Gastrocnemius medialis (tissue), 4 donors: ENCODE measurements at regions of chr5 and their contacts with region 1.

Region 1: DNA sequence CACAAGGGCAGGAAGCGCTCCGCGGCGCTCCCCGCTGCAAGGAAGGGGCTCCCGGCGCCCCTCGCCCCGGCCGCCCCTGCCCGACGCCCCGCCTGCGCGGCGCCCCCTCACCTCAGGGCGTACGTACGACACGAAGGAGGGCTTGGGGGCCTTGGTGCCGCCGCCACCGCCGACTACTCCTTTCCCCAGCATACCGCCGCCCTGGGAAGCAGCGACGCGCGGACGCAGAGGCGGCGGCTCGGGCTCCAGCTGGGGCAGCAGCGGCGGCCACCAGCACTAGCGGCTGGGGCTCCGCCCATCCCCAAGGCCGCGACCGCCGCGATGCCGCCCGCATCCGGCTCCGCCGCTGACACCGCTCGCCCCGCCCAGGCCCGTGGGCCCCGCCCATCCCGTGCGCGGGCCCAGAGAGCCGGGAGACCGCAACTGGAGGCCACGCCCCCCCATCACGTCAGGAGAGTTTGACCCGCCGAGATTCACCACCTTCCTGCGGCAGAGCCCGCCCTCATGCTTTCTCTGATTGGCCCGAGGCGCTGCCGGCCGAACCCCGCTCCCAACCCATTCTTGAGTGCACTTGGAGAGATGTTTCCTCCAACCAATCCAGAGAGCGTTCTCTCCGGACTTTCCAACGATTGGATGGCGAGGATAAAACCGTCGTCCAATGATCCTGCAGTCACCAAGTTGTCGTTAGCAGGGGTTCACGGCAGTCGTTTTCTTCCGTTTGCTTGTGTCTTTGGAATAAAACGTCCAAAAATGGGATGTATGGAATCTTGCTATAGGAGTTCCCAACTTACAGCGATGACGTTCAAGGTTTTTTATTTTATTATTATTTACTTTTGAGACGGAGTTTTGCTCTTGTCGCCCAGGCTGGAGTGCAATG is at the start of gene MTMR12:
- DNase-seq: peak; percentile 99
- ATAC-seq: peak; percentile 97 to 98
- H3K4me3 ChIP-seq: peak within 1 kb of the TSS; percentile 69 to 88 (median 82)
- H3K27ac ChIP-seq: peak within 1 kb of the TSS; percentile 85 to 98 (median 92)
- H3K4me1 ChIP-seq: peaks cover 10 to 33% of the 10 kb centered on the region in 2 donors
- H3K27me3 ChIP-seq: no peaks in the 10 kb centered on the region
- CTCF ChIP-seq: no peak
- POLR2A ChIP-seq: peak; percentile 88 to 91
- total RNA-seq, gene MTMR12: 6.4 to 11.5 (median 10.6) TPM

Region 2: DNA sequence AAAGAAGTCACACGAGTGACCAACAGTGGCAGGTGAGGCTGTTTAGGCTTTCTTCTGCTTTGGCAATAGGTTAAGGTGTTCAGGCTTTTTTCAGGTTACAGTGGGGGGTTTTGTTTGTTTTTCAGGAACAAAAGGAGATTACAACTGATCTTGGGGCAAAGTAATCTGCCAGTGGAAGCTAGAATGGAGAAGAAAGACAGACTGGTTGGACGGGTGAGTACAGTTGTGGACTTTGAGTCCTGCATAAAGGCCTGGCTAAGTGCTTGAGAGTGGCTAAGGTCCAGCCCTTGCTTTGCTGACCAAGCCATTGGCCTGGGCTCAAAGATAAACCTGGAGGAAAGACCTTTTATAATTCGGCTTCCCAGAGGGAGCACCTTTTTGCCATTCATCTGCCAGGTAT is 63.2 kb before region 1 on chr5:
- in situ Hi-C with region 1: no loop called
- intact Hi-C with region 1: no loop called
- DNase-seq: no peak
- ATAC-seq: no peak
- H3K4me3 ChIP-seq: no peak overlapping the region
- H3K27ac ChIP-seq: no peak overlapping the region
- H3K4me1 ChIP-seq: no peaks in the 10 kb centered on the region
- H3K27me3 ChIP-seq: no peaks in the 10 kb centered on the region
- CTCF ChIP-seq: no peak
- POLR2A ChIP-seq: no peak

Region 3: DNA sequence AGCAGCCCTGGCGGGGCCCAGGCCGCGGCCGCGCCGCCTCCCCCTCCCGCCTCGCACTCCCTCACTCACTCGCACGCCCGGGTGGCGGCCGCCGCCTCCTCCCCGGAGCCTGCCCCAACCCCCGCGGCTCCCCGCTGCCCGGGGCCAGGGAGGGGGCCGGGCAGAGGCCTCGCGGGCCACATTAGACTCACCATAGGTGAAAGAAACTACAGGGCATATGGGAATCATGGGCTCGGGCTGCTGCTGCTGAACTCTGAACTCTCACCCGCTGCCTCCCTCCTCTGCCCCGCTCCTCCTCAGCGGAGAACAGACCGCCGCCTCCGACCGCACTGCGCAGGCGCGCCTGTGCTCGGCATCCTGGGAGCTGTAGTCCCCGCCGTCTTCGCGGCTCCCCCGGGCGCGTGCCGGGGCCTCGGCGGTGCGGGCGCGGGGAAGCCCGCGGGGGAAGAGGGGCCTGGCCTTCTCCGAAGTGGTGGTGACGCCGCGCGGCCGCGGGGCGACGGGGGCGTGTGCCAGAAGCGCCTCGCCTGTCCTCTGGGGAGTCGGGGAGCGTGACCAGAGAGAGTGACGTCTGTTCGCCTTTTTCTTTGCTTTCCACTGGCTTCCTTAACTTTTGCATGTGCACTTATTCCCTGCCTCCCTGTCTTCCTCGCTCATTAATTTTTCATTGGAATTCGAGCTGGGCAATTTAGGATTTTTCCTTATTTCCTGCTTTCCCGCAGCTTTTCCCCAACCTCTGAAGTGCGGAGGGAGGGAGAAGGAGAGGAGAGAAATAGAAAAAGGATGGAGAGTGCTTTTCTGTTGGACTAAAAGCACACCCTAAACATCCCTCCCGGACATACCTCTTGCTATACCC is 131.8 kb after region 1 on chr5 and contains the start of gene ZFR:
- in situ Hi-C with region 1: loop called in 1 of 4 experiments (anchors 10 kb)
- intact Hi-C with region 1: no loop called
- DNase-seq: peak; percentile 88 to 92
- ATAC-seq: peak; percentile 90 to 94
- H3K4me3 ChIP-seq: peak within 1 kb of the TSS; percentile 68 to 88 (median 76)
- H3K27ac ChIP-seq: peak within 1 kb of the TSS; percentile 89 to 97 (median 92)
- H3K4me1 ChIP-seq: peaks cover 26 to 34% of the 10 kb centered on the region in 2 donors
- H3K27me3 ChIP-seq: no peaks in the 10 kb centered on the region
- CTCF ChIP-seq: no peak
- POLR2A ChIP-seq: peak; percentile 85 to 86
- total RNA-seq, gene ZFR: 84.0 to 109 (median 89.4) TPM

Region 4: GRCh38 chr5:32932241-32932935 is 619.5 kb after region 1 on chr5:
- in situ Hi-C with region 1: no loop called
- intact Hi-C with region 1: no loop called
- DNase-seq: no peak
- ATAC-seq: no peak
- H3K4me3 ChIP-seq: no peak overlapping the region
- H3K27ac ChIP-seq: no peak overlapping the region
- H3K4me1 ChIP-seq: no peaks in the 10 kb centered on the region
- H3K27me3 ChIP-seq: no peaks in the 10 kb centered on the region
- CTCF ChIP-seq: no peak
- POLR2A ChIP-seq: no peak